ENCODE measurements at regions of chr2 and their contacts with region 1.

Region 1: DNA sequence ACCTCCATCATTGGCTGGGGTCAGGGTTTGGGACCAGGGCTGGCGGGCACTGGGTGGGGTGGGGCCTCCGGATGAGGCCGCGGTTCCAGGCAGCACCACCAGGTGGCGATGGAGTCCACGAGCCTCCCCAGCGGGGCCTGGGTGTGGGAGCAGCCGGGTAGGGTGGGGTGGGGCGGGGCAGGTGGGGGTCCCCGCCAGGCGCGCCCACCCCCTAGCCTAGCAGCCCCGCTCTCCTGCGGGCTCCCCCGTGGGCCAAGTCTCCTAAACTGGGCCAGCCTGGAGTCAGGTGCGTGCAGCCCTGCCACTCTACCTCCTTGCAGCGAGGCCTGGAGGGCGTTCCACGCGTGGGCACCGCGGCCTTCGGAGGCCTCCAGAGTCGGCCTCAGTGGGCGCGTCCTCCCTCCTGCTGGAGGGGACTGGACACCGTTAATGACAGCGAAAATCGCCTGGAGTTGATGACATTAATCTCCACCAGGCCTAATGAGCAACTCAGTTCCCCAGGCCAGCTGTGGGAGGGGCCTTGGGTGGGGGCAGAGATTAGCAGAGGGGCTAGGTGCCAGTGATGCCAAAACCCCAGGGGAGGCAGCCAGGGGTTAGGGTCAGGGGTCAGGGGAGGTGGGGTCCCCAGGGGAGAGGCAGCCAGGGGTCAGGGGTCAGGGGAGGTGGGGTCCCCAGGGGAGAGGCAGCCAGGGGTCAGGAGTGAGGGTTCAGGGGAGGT is 187.6 kb downstream of the TWIST2 start:
- DNase-seq: peak; percentile 53 to 76 (median 65)
- ATAC-seq: peak; percentile 84 to 90 (median 88)
- H3K4me3 ChIP-seq: no peak overlapping the region
- H3K27ac ChIP-seq: no peak overlapping the region
- H3K4me1 ChIP-seq: no peaks in the 10 kb centered on the region
- H3K27me3 ChIP-seq: no peaks in the 10 kb centered on the region
- CTCF ChIP-seq: peak; percentile 58 to 90 (median 86)
- POLR2A ChIP-seq: no peak

Region 2: GRCh38 chr2:239876271-239876947 is 840.9 kb after region 1 on chr2:
- intact Hi-C with region 1: loop called in 1 of 2 experiments (anchors 5 kb)
- DNase-seq: peak in 1 of 3 donors; percentile 37
- ATAC-seq: peak in 2 of 4 donors; percentile 23 to 27
- H3K4me3 ChIP-seq: no peak overlapping the region
- H3K27ac ChIP-seq: no peak overlapping the region
- H3K4me1 ChIP-seq: no peaks in the 10 kb centered on the region
- H3K27me3 ChIP-seq: no peaks in the 10 kb centered on the region
- CTCF ChIP-seq: no peak
- POLR2A ChIP-seq: no peak

Measured in right lobe of liver (tissue), 6 donors.